ENCODE measurements at regions of chr7 and their contacts with region 1.

Region 1: GRCh38 chr7:105402221-105403095 is 13.7 kb upstream of the SRPK2 start:
- DNase-seq: no peak
- H3K4me3 ChIP-seq: no peak overlapping the region
- H3K27ac ChIP-seq: peak overlapping the region in 1 of 59 donors; percentile 14
- H3K27me3 ChIP-seq: no peaks in the 10 kb centered on the region
- CTCF ChIP-seq: no peak

Region 2: GRCh38 chr7:105352018-105352612 is 50.3 kb before region 1 on chr7:
- intact Hi-C with region 1: loop called in 1 of 2 experiments (anchors 5 kb)
- DNase-seq: peak in 9 of 10 donors; percentile 48 to 75 (median 61)
- H3K4me3 ChIP-seq: peak overlapping the region in 5 of 59 donors; percentile 2 to 18 (median 9)
- H3K27ac ChIP-seq: peak overlapping the region in 50 of 59 donors; percentile 1 to 87 (median 66)
- H3K27me3 ChIP-seq: no peaks in the 10 kb centered on the region
- CTCF ChIP-seq: no peak

Region 3: GRCh38 chr7:105487579-105488571 is 85.4 kb after region 1 on chr7:
- intact Hi-C with region 1: loop called in 1 of 2 experiments (anchors 5 kb)
- DNase-seq: no peak
- H3K4me3 ChIP-seq: no peak overlapping the region
- H3K27ac ChIP-seq: peak overlapping the region in 18 of 59 donors; percentile 7 to 69 (median 30)
- H3K27me3 ChIP-seq: no peaks in the 10 kb centered on the region
- CTCF ChIP-seq: peak in 54 of 56 donors; percentile 34 to 79 (median 59)

Region 4: DNA sequence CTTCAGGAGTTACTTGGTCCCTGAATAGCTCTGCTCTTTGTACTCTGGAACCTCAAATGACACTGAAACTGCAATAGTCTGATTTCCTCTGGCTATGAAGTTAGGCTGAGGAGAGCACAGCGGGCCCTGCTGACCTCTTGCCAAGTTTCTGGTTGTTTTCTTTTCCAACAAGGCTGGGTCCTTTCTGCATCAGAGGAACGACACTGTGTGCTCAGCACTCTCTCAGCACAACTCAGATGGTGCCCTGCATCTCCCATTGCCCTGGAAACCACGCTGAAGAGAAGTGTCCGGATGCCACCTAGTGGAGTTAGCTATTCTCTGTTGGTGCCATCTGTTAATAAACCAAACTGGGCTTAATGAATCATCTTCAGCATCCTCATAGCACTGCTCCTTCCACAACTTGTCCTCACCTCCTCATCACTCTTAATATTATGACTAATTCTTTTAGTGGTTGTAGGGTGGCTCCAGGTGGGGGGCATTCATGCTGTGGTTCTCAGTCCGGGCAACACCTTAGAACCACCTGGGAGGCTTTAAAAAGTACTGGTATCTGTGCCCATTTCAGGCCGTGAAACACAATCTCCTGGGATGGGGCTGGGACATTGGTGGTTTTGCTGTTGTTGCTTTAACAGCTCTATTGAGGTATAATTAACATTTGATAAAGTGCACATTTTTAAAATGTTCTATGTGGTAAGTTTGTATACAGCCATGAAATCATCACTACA is 187.1 kb after region 1 on chr7:
- intact Hi-C with region 1: loop called in 1 of 2 experiments (anchors 10 kb)
- DNase-seq: peak; percentile 29 to 87 (median 78)
- H3K4me3 ChIP-seq: no peak overlapping the region
- H3K27ac ChIP-seq: peak overlapping the region in 20 of 59 donors; percentile 1 to 64 (median 38)
- H3K27me3 ChIP-seq: no peaks in the 10 kb centered on the region
- CTCF ChIP-seq: peak; percentile 31 to 86 (median 74)

Region 5: DNA sequence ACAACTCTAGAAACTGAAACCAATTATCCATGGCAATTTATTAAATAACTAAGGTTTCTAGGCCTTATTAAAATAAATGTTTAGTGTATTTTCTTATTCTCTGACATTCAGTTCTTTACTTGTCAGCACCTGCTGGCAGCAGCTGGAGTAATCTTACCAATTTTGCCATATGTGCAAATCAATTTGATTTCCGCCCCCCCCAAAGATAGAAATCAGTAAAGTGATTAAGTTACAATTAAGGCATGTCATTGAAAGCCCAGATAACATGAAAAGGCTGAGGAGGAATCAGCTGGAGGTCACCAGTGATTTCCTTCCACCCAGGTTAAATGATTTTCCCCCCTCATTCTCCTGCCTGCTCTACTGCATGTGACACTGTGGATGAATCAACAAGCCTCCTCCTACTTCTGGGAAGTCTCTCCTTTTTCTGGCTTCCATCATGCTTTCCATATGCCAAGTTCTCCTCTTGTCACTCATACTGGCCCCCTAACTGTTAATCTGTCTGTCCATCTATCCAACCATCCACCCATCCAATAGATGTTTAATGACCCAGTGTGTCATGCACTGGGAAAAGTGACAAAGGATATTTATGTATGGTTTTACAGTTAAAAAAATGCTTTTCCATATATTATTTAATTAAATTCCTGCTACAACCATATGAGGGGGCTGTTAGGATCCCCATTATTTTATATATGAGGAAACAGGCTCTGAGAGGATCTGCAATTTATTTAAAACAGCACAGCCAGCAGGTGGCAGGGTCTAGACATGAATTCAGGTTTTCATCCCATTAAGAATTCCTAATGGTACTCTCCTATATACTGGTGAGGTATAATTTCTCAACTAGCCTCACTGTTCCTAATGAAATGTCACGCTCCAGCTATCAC is 357.5 kb after region 1 on chr7:
- intact Hi-C with region 1: no loop called
- DNase-seq: peak in 6 of 10 donors; percentile 32 to 71 (median 49)
- H3K4me3 ChIP-seq: no peak overlapping the region
- H3K27ac ChIP-seq: no peak overlapping the region
- H3K27me3 ChIP-seq: no peaks in the 10 kb centered on the region
- CTCF ChIP-seq: peak in 55 of 56 donors; percentile 41 to 83 (median 66)

Region 6: GRCh38 chr7:105808703-105809590 is 406.5 kb after region 1 on chr7:
- intact Hi-C with region 1: no loop called
- DNase-seq: no peak
- H3K4me3 ChIP-seq: no peak overlapping the region
- H3K27ac ChIP-seq: no peak overlapping the region
- H3K27me3 ChIP-seq: no peaks in the 10 kb centered on the region
- CTCF ChIP-seq: no peak